Common myeloid progenitor, CD34-positive (primary cell): ENCODE measurements at regions of chr1 and their contacts with region 1.

Region 1: GRCh38 chr1:200620273-200621131 is at the start of gene KIF14:
- DNase-seq: peak; percentile 95 to 99 (median 99)
- H3K4me3 ChIP-seq: peak within 1 kb of the TSS; percentile 58 to 95 (median 91)
- H3K27ac ChIP-seq: peak within 1 kb of the TSS; percentile 68 to 88
- H3K4me1 ChIP-seq: peaks cover 5 to 27% (median 19%) of the 10 kb centered on the region in 4 experiments
- H3K27me3 ChIP-seq: no peaks in the 10 kb centered on the region

Region 2: DNA sequence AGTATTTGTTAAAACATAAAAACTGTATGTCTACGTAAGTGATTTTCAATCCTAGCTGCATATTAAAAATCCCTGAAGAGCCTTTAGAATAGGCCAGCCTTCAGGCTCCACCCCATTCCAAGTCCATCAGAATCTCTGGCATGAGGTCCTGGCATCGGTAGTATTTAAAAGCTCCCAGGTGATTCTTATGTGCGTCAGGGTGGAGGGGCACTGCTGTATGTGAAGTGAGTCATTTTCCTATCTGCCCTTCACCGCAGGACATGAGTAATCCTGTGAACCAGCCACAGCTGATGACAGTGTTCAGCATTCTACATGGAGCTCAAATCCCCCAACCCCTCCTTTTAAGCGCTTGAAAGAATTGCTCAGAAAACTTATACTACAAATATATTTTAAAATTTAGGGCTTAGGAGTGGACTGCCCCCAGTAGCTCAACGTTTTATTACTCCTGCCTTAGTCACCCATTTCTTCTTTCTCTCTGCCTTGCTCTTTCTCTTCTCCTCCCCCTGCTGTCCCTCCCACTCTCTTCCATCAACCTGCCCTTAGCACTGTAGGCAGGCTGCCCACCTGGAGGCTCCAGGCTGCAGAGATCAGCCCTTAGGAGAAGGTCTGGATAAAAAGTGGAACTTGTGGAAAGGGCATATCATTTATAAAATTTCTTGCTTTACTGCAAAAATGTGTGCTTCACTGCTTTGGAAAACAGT is 136.9 kb before region 1 on chr1:
- CTCF ChIA-PET with region 1: no interaction called
- POLR2A ChIA-PET with region 1: no interaction called
- DNase-seq: peak; percentile 38 to 85 (median 80)
- H3K4me3 ChIP-seq: no peak overlapping the region
- H3K27ac ChIP-seq: no peak overlapping the region
- H3K4me1 ChIP-seq: peaks cover 0 to 2% (median under 1%) of the 10 kb centered on the region in 4 experiments
- H3K27me3 ChIP-seq: no peaks in the 10 kb centered on the region

Region 3: DNA sequence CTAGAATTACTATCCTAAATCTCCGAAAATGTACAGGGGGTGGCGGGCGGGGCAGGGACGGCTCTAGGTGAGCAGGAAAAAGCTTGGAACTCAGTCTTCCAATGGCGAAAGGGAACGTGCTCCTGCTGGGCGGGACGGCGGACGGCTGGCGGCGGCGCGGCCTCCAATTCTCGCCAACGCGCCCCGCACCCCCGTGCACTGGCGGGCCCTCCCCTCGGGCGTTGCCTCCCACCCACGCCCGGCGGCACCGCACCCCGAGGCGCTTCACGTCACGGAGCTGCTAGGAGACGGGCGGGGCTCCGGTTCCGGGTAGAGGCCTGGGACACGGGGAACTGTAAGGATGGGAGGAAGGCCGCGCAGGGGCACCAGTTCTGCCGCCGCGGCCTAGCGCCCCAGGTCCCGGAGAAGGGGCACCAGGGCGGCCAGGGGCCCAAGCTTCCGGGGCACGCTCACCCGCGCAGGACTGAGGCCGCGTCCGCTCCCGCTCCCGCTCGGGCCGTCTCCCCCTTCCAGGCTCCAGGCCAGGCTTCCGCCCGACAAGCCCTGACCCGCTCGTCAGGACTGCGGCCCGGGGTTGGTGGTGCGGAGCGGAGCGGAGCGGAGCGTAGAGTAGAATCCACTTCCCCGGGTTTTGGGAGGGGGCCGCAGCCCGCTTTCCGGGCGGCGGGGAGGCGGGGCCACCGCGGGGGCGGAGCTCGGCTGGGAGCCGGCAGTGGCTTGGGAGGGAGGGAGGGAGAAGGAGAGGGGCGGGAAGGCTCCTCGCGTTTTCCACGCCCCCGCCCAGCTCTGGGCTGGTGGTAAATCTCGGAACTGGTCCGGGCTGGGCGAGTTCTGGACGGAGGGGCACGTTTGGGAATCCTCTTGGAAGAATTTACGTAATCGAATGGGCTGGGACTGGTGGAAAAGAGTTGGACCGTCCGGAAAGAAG is 49.1 kb after region 1 on chr1 and contains the start of gene DDX59:
- CTCF ChIA-PET with region 1: interaction called, 26 read pairs
- POLR2A ChIA-PET with region 1: interaction called, 7 read pairs
- DNase-seq: peak; percentile 95 to 97 (median 96)
- H3K4me3 ChIP-seq: peak within 1 kb of the TSS; percentile 63 to 92 (median 82)
- H3K27ac ChIP-seq: peak within 1 kb of the TSS; percentile 98 to 99
- H3K4me1 ChIP-seq: peaks cover 18 to 30% (median 24%) of the 10 kb centered on the region in 4 experiments
- H3K27me3 ChIP-seq: no peaks in the 10 kb centered on the region

Region 4: DNA sequence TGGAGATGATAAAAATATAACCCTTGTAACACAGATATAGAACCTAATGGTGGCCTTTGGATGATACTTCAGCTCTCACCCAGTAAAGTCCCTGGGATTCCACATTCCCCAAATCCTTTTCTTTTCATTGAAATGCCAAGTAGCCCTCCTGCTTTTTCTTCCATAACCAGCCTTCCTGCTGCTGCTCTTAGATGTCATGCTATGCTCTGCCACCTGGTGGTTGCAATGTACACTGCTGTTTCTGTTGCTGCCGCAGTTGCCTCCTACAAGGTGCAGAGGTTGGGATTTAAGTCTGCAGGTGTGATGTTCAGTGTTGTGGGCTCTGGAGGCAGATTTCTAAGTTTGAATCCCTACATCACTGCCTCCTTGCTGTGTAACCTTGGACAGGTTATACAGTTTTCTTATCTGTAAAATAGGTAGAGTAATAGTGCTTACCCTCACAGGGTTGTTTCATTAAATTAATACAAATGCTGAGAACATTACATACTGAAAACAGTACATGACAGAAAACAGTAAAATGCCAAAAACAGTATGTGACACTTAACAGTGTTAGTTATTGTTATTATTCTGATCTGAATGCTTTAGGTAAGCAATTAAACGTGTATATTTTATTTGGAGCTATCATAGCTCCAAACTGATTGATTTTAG is 182.5 kb after region 1 on chr1:
- CTCF ChIA-PET with region 1: interaction called, 64 read pairs
- POLR2A ChIA-PET with region 1: no interaction called
- DNase-seq: peak; percentile 80 to 87 (median 80)
- H3K4me3 ChIP-seq: no peak overlapping the region
- H3K27ac ChIP-seq: no peak overlapping the region
- H3K4me1 ChIP-seq: no peaks in the 10 kb centered on the region
- H3K27me3 ChIP-seq: no peaks in the 10 kb centered on the region